Right lobe of liver (tissue), 6 donors: ENCODE measurements at regions of chr4 and their contacts with region 1.

Region 1: GRCh38 chr4:99282731-99283130 is 8.1 kb downstream of the ADH1A start:
- DNase-seq: no peak
- ATAC-seq: peak in 3 of 4 donors; percentile 9 to 34 (median 18)
- H3K4me3 ChIP-seq: no peak overlapping the region
- H3K27ac ChIP-seq: no peak overlapping the region
- H3K4me1 ChIP-seq: no peaks in the 10 kb centered on the region
- H3K27me3 ChIP-seq: no peaks in the 10 kb centered on the region
- CTCF ChIP-seq: no peak
- POLR2A ChIP-seq: no peak

Region 2: GRCh38 chr4:99120501-99120900 is 162.2 kb before region 1 on chr4:
- intact Hi-C with region 1: loop called in 1 of 2 experiments (anchors 10 kb)
- DNase-seq: peak in 1 of 3 donors; percentile 59
- ATAC-seq: peak; percentile 39 to 62 (median 60)
- H3K4me3 ChIP-seq: no peak overlapping the region
- H3K27ac ChIP-seq: no peak overlapping the region
- H3K4me1 ChIP-seq: peaks cover 0 to 5% (median 0%) of the 10 kb centered on the region in 4 donors
- H3K27me3 ChIP-seq: no peaks in the 10 kb centered on the region
- CTCF ChIP-seq: no peak
- POLR2A ChIP-seq: no peak

Region 3: GRCh38 chr4:99180382-99181070 is 102.2 kb before region 1 on chr4:
- intact Hi-C with region 1: no loop called
- DNase-seq: no peak
- ATAC-seq: peak in 1 of 4 donors; percentile 7
- H3K4me3 ChIP-seq: no peak overlapping the region
- H3K27ac ChIP-seq: no peak overlapping the region
- H3K4me1 ChIP-seq: no peaks in the 10 kb centered on the region
- H3K27me3 ChIP-seq: no peaks in the 10 kb centered on the region
- CTCF ChIP-seq: no peak
- POLR2A ChIP-seq: no peak